Activated CD4-positive, alpha-beta T cell treated with anti-CD3 and anti-CD28 coated beads, Interleukin-2, amount 10 ng/mL, durations not matched to agents 7 days and 5 days (primary cell): ENCODE measurements at regions of chr3 and their contacts with region 1.

Region 1: GRCh38 chr3:9932843-9933560 is 632 bp upstream of the CRELD1 start:
- DNase-seq: peak; percentile 87
- H3K4me3 Mint-ChIP-seq: peak overlapping the region; percentile 96
- H3K27ac Mint-ChIP-seq: peak overlapping the region; percentile 98
- H3K4me1 Mint-ChIP-seq: peaks cover 40% of the 10 kb centered on the region
- H3K27me3 Mint-ChIP-seq: no peaks in the 10 kb centered on the region

Region 2: GRCh38 chr3:9765865-9766264 is 167.1 kb before region 1 on chr3:
- CTCF ChIA-PET with region 1: no interaction called
- POLR2A ChIA-PET with region 1: no interaction called
- DNase-seq: no peak
- H3K4me3 Mint-ChIP-seq: no peak overlapping the region
- H3K27ac Mint-ChIP-seq: no peak overlapping the region
- H3K4me1 Mint-ChIP-seq: peaks cover 36% of the 10 kb centered on the region
- H3K27me3 Mint-ChIP-seq: no peaks in the 10 kb centered on the region

Region 3: GRCh38 chr3:9902372-9903237 is 30.4 kb before region 1 on chr3 and contains the start of gene IL17RE:
- CTCF ChIA-PET with region 1: interaction called, 10 read pairs
- POLR2A ChIA-PET with region 1: no interaction called
- DNase-seq: no peak
- H3K4me3 Mint-ChIP-seq: peak within 1 kb of the TSS; percentile 22
- H3K27ac Mint-ChIP-seq: peak within 1 kb of the TSS; percentile 66
- H3K4me1 Mint-ChIP-seq: peaks cover 31% of the 10 kb centered on the region
- H3K27me3 Mint-ChIP-seq: no peaks in the 10 kb centered on the region
- total RNA-seq, gene IL17RE: 1.5 to 2.7 TPM

Region 4: GRCh38 chr3:9915254-9916141 is 17.5 kb before region 1 on chr3:
- CTCF ChIA-PET with region 1: interaction called, 21 read pairs
- POLR2A ChIA-PET with region 1: no interaction called
- DNase-seq: peak; percentile 16
- H3K4me3 Mint-ChIP-seq: peak overlapping the region; percentile 64
- H3K27ac Mint-ChIP-seq: no peak overlapping the region
- H3K4me1 Mint-ChIP-seq: peaks cover 16% of the 10 kb centered on the region
- H3K27me3 Mint-ChIP-seq: peaks cover 6% of the 10 kb centered on the region

Region 5: DNA sequence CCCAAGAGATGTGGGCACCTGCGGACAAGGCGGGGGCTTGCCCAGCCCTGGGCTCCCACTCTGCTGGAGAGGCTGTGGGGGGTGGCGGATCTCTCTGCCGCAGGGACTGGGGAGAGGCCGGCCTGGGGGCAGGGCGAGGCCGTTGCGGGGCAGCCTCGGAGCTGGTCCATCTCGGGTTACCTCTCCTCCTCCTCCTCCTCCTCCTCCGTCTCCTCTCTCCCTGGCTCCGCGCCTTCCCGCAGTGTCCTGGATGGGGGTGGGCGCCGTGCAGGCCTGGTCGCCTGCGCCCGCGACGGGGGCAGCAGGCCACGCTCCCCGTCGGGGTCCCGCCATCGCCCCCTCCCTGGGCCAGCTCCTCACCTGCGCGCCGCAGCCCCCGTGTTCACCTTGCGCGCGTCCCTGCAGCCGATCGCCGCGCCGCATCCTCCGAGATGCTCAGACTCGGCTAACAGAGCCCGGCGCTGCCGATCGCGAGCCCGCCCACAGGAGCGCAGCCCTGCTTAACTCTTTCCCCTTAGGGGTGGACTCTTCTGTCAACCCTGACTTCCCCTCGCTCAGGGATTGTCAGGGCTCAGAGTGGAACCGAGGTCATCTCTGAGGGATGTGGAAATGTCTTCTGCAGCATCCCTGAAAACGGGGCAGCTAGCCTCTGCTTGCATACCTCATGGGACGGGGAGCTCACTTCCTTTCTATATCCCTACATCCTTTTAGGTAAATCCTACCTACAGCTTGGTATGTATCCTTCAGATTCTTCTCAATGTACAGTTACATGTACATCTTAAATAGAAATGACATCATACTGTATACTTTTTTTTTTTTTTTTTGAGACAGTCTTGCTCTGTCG is 19.2 kb after region 1 on chr3 and contains the start of gene PRRT3:
- CTCF ChIA-PET with region 1: interaction called, 17 read pairs
- POLR2A ChIA-PET with region 1: interaction called, 4 read pairs
- DNase-seq: peak; percentile 68
- H3K4me3 Mint-ChIP-seq: peak within 1 kb of the TSS; percentile 83
- H3K27ac Mint-ChIP-seq: peak within 1 kb of the TSS; percentile 46
- H3K4me1 Mint-ChIP-seq: peaks cover 19% of the 10 kb centered on the region
- H3K27me3 Mint-ChIP-seq: no peaks in the 10 kb centered on the region
- total RNA-seq, gene PRRT3: 4.8 to 5.5 TPM

Region 6: GRCh38 chr3:10286596-10287330 is 353.8 kb after region 1 on chr3:
- CTCF ChIA-PET with region 1: interaction called, 11 read pairs
- POLR2A ChIA-PET with region 1: no interaction called
- DNase-seq: peak; percentile 67
- H3K4me3 Mint-ChIP-seq: no peak overlapping the region
- H3K27ac Mint-ChIP-seq: no peak overlapping the region
- H3K4me1 Mint-ChIP-seq: peaks cover 28% of the 10 kb centered on the region
- H3K27me3 Mint-ChIP-seq: no peaks in the 10 kb centered on the region

Region 7: GRCh38 chr3:10322352-10322710 is 389.3 kb after region 1 on chr3:
- CTCF ChIA-PET with region 1: interaction called, 25 read pairs
- POLR2A ChIA-PET with region 1: no interaction called
- DNase-seq: peak; percentile 49
- H3K4me3 Mint-ChIP-seq: no peak overlapping the region
- H3K27ac Mint-ChIP-seq: no peak overlapping the region
- H3K4me1 Mint-ChIP-seq: peaks cover 27% of the 10 kb centered on the region
- H3K27me3 Mint-ChIP-seq: peaks cover 15% of the 10 kb centered on the region